OCI-LY7 (cell line): ENCODE measurements at regions of chr12 and their contacts with region 1.

Region 1: GRCh38 chr12:125330645-125331341 is 265.6 kb downstream of the AACS start:
- DNase-seq: peak; percentile 53
- H3K4me3 ChIP-seq: no peak overlapping the region
- H3K27ac ChIP-seq: no peak overlapping the region
- H3K4me1 ChIP-seq: peaks cover 8% of the 10 kb centered on the region
- CTCF ChIP-seq: peak; percentile 86

Region 2: GRCh38 chr12:125240717-125241116 is 90.1 kb before region 1 on chr12:
- CTCF ChIA-PET with region 1: interaction called, 3 read pairs
- POLR2A ChIA-PET with region 1: no interaction called
- intact Hi-C with region 1: loop called (anchors 5 kb)
- DNase-seq: no peak
- H3K4me3 ChIP-seq: no peak overlapping the region
- H3K27ac ChIP-seq: no peak overlapping the region
- H3K4me1 ChIP-seq: no peaks in the 10 kb centered on the region
- CTCF ChIP-seq: no peak

Region 3: DNA sequence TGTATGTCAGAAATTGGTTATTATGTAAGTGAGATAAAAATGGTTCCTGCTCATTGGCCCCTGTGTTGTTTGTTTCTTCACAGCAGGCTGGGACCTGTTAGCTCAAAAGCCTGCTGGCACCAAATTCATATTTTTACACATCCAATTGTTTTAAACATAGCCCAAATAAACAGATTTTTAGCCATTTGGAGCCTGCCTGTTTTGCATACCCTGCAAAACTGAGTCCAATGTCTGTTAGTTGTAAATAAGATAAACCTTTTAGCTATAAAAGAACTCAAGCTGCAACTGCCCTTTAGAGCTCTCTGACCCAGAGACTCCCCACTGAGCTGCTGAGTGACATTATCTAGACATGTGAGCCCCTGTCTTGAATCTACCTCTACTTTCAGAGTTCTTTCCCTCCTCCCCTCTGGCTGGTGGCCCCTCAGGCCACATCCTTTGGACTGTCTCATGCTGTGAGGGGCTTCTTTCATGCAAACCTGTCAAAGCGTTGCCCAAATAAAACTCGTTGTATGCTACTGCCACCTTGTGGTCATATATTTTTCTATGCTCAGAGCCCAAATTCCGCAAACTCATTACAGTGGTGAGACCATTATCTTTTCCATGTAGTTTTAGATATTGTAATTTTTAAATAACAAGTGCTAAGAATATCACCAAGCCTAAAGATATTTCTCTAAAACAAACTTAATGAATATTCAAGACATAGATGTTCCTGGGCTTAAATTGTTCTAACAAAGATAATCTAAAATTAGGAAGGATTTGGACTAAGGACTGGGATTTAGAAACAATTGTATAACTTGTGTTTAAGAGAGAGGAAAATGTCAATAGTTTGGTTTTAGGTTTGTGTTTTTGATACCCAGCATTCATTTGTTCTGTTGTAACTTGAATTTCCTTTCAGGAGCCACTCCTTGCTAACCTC is 72.3 kb after region 1 on chr12:
- CTCF ChIA-PET with region 1: interaction called, 4 read pairs
- POLR2A ChIA-PET with region 1: interaction called, 3 read pairs
- intact Hi-C with region 1: loop called (anchors 1 kb)
- DNase-seq: peak; percentile 81
- H3K4me3 ChIP-seq: no peak overlapping the region
- H3K27ac ChIP-seq: no peak overlapping the region
- H3K4me1 ChIP-seq: peaks cover 44% of the 10 kb centered on the region
- CTCF ChIP-seq: peak; percentile 95

Region 4: GRCh38 chr12:125518074-125518473 is 187.3 kb after region 1 on chr12:
- CTCF ChIA-PET with region 1: no interaction called
- POLR2A ChIA-PET with region 1: no interaction called
- intact Hi-C with region 1: loop called (anchors 5 kb)
- DNase-seq: no peak
- H3K4me3 ChIP-seq: no peak overlapping the region
- H3K27ac ChIP-seq: no peak overlapping the region
- H3K4me1 ChIP-seq: no peaks in the 10 kb centered on the region
- CTCF ChIP-seq: no peak

Region 5: GRCh38 chr12:125773033-125773640 is 442.3 kb after region 1 on chr12:
- CTCF ChIA-PET with region 1: no interaction called
- POLR2A ChIA-PET with region 1: no interaction called
- intact Hi-C with region 1: loop called (anchors 5 kb)
- DNase-seq: peak; percentile 77
- H3K4me3 ChIP-seq: no peak overlapping the region
- H3K27ac ChIP-seq: no peak overlapping the region
- H3K4me1 ChIP-seq: no peaks in the 10 kb centered on the region
- CTCF ChIP-seq: peak; percentile 89